GM12878 (cell line): ENCODE measurements at regions of chr3 and their contacts with region 1.

Region 1: GRCh38 chr3:17023006-17023664 is 138.4 kb downstream of the PLCL2 start:
- DNase-seq: peak; percentile 56
- ATAC-seq: peak; percentile 99
- H3K4me3 ChIP-seq: no peak overlapping the region
- H3K27ac ChIP-seq: peak overlapping the region; percentile 45; the same call in 1 of the 2 replicates
- H3K4me1 ChIP-seq: no peaks in the 10 kb centered on the region
- H3K27me3 ChIP-seq: no peaks in the 10 kb centered on the region
- CTCF ChIP-seq: no peak
- EP300 ChIP-seq: peak in 1 of 2 experiments; percentile 41; a peak in 2 of 4 replicates
- POLR2A ChIP-seq: no peak
- RAD21 ChIP-seq: no peak

Region 2: GRCh38 chr3:16546186-16547010 is 476.7 kb before region 1 on chr3:
- CTCF ChIA-PET with region 1: no interaction called
- POLR2A ChIA-PET with region 1: no interaction called
- RAD21 ChIA-PET with region 1: no interaction called
- SMC1A ChIA-PET with region 1: no interaction called
- in situ Hi-C with region 1: no loop called
- intact Hi-C with region 1: no loop called
- DNase-seq: no peak
- ATAC-seq: no peak
- H3K4me3 ChIP-seq: no peak overlapping the region
- H3K27ac ChIP-seq: no peak overlapping the region
- H3K4me1 ChIP-seq: peaks cover 13% of the 10 kb centered on the region
- H3K27me3 ChIP-seq: no peaks in the 10 kb centered on the region
- CTCF ChIP-seq: no peak
- EP300 ChIP-seq: no peak
- POLR2A ChIP-seq: no peak
- RAD21 ChIP-seq: no peak

Region 3: GRCh38 chr3:16828815-16829214 is 194.3 kb before region 1 on chr3:
- CTCF ChIA-PET with region 1: interaction called, 39 read pairs
- POLR2A ChIA-PET with region 1: interaction called, 3 read pairs
- RAD21 ChIA-PET with region 1: interaction called, 11 read pairs
- SMC1A ChIA-PET with region 1: interaction called, 5 read pairs
- in situ Hi-C with region 1: no loop called
- intact Hi-C with region 1: no loop called
- DNase-seq: no peak
- ATAC-seq: peak; percentile 90
- H3K4me3 ChIP-seq: no peak overlapping the region
- H3K27ac ChIP-seq: no peak overlapping the region
- H3K4me1 ChIP-seq: peaks cover 8% of the 10 kb centered on the region
- H3K27me3 ChIP-seq: no peaks in the 10 kb centered on the region
- CTCF ChIP-seq: peak; percentile 58 to 65 (median 60)
- EP300 ChIP-seq: no peak
- POLR2A ChIP-seq: no peak
- RAD21 ChIP-seq: peak; percentile 93

Region 4: GRCh38 chr3:16884084-16884747 is 138.9 kb before region 1 on chr3:
- CTCF ChIA-PET with region 1: interaction called, 21 read pairs
- POLR2A ChIA-PET with region 1: interaction called, 7 read pairs
- RAD21 ChIA-PET with region 1: interaction called, 50 read pairs
- SMC1A ChIA-PET with region 1: interaction called, 41 read pairs
- in situ Hi-C with region 1: no loop called
- intact Hi-C with region 1: no loop called
- DNase-seq: no peak
- ATAC-seq: peak; percentile 71
- H3K4me3 ChIP-seq: peak overlapping the region; percentile 75
- H3K27ac ChIP-seq: peak overlapping the region; percentile 93
- H3K4me1 ChIP-seq: peaks cover 2% of the 10 kb centered on the region; the same call in 1 of the 2 replicates
- H3K27me3 ChIP-seq: no peaks in the 10 kb centered on the region
- CTCF ChIP-seq: peak; percentile 37 to 79 (median 74)
- EP300 ChIP-seq: no peak
- POLR2A ChIP-seq: peak; percentile 66
- RAD21 ChIP-seq: peak; percentile 64

Region 5: DNA sequence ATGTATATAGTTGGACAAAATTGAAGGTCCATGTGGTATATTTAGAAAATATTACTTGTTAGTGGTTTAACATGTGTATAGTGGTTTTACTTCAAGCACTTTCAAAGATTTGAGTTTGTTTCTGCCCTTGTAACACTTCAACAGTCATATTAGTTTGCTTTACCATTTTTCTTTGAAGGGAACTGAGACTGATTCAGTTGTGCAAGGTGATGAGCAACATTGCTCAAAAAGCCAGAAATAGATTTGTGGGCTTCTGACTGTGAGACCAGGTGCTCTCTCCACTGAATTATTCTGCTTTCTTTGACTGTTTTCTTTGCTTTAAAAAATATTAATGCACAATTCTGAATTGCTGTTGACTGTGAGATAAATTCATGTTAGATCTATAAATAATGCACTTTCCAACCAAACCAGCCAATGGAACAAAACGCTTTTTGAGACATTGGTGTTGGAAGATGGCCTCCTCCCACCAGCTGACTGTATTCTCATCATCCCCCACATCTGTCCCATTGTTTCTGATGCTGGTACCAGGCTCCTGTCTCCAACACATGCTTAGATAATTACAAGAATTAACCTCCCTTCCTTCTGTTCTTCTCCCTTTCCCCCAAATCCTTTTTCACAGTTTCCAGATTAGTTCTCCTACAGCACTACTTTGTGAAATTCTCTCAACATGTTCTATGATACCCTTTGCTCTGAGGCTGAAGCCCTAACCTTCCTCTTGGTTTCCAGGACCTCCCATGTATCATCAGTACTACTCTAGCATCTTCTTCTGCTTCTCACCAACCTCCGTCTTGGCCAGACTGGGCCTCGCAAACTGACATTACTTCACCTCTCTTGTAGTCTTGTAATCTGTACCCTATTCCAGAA is 110.5 kb before region 1 on chr3:
- CTCF ChIA-PET with region 1: interaction called, 13 read pairs
- POLR2A ChIA-PET with region 1: interaction called, 5 read pairs
- RAD21 ChIA-PET with region 1: interaction called, 15 read pairs
- SMC1A ChIA-PET with region 1: interaction called, 44 read pairs
- in situ Hi-C with region 1: no loop called
- intact Hi-C with region 1: no loop called
- DNase-seq: peak; percentile 90
- ATAC-seq: peak; percentile 92
- H3K4me3 ChIP-seq: peak overlapping the region; percentile 27
- H3K27ac ChIP-seq: peak overlapping the region; percentile 99
- H3K4me1 ChIP-seq: peaks cover 49% of the 10 kb centered on the region
- H3K27me3 ChIP-seq: no peaks in the 10 kb centered on the region
- CTCF ChIP-seq: no peak
- EP300 ChIP-seq: peak; percentile 91 to 96
- POLR2A ChIP-seq: no peak
- RAD21 ChIP-seq: no peak

Region 6: DNA sequence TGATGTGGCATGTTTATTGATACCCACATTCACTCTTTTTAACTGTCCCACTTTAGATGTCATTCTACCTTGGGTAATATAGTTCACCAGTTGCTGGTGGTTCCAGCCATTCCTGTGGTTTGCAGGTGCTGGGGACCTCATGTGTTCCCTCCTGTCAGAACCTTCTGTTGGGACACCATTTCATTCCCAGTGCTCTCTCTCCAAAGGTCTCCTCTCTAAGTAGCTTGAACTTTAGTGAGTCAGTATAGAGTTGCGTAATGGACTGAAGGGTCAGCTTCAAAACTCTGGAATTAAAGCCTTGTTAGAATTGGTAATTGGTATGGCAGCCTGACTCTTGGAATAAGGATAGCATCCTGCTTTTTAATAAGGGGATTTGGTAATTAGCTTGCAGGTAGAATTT is 29.9 kb before region 1 on chr3:
- CTCF ChIA-PET with region 1: no interaction called
- POLR2A ChIA-PET with region 1: interaction called, 4 read pairs
- RAD21 ChIA-PET with region 1: interaction called, 10 read pairs
- SMC1A ChIA-PET with region 1: interaction called, 17 read pairs
- in situ Hi-C with region 1: no loop called
- intact Hi-C with region 1: no loop called
- DNase-seq: no peak
- ATAC-seq: no peak
- H3K4me3 ChIP-seq: no peak overlapping the region
- H3K27ac ChIP-seq: no peak overlapping the region
- H3K4me1 ChIP-seq: peaks cover 4% of the 10 kb centered on the region
- H3K27me3 ChIP-seq: no peaks in the 10 kb centered on the region
- CTCF ChIP-seq: no peak
- EP300 ChIP-seq: no peak
- POLR2A ChIP-seq: no peak
- RAD21 ChIP-seq: no peak

Region 7: DNA sequence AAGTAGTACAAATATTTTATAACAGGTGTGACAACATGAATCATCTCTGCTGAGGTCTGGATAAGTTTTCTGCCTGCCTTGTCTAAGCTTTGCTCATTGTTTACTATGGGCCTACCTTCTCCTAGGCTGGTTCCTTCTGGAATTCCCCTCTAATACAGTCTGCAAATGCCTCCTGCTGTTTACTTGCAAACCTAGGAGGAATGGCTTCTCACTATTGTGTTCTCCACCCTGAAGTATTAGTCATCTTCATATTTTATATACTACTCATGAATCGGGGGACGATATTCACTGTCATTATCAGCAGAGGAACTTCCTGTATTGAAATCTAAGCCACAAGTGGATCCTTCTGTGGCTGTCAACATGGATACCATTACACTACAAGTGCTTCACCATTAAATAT is 16.4 kb after region 1 on chr3:
- CTCF ChIA-PET with region 1: interaction called, 7 read pairs
- POLR2A ChIA-PET with region 1: interaction called, 5 read pairs
- RAD21 ChIA-PET with region 1: interaction called, 17 read pairs
- SMC1A ChIA-PET with region 1: interaction called, 24 read pairs
- in situ Hi-C with region 1: no loop called
- intact Hi-C with region 1: no loop called
- DNase-seq: no peak
- ATAC-seq: peak; percentile 52
- H3K4me3 ChIP-seq: no peak overlapping the region
- H3K27ac ChIP-seq: peak overlapping the region; percentile 42; the same call in 1 of the 2 replicates
- H3K4me1 ChIP-seq: peaks cover 21% of the 10 kb centered on the region
- H3K27me3 ChIP-seq: no peaks in the 10 kb centered on the region
- CTCF ChIP-seq: no peak
- EP300 ChIP-seq: no peak
- POLR2A ChIP-seq: no peak
- RAD21 ChIP-seq: no peak

Region 8: DNA sequence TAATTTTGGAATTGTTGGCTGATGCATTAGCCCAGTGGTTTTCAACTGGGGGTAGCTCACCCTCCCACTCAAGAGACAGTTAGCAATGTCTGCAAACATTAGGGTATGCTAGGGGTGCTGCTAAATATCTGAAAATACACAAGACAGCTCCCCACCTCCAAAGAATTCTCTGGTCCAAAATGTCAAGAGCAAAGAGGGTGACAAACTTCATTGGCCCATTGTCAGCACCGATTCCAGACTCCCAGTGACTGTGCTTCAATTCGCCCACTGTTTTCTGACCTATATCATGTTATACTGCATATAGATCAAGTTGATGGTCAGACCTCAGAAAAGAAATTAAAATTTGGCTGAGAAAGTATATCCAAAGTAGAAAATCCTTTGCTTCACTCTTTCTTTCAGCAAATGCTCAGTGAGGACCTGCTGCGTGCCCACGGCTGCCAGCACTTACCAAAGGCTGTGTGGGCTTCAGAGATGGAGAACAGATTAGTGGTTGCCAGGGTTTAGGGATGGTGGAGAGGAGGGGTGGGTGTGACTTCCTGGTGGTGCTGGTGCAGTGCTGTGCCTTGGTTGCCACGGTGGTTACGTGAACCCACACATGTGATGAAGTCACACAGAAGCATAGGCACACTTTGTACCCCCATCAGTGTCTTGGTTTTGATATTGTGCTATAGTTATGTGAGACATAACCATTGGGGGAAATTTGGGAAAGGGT is 65.6 kb after region 1 on chr3:
- CTCF ChIA-PET with region 1: no interaction called
- POLR2A ChIA-PET with region 1: no interaction called
- RAD21 ChIA-PET with region 1: no interaction called
- SMC1A ChIA-PET with region 1: no interaction called
- in situ Hi-C with region 1: no loop called
- intact Hi-C with region 1: no loop called
- DNase-seq: no peak
- ATAC-seq: no peak
- H3K4me3 ChIP-seq: no peak overlapping the region
- H3K27ac ChIP-seq: no peak overlapping the region
- H3K4me1 ChIP-seq: no peaks in the 10 kb centered on the region
- H3K27me3 ChIP-seq: no peaks in the 10 kb centered on the region
- CTCF ChIP-seq: no peak
- EP300 ChIP-seq: no peak
- POLR2A ChIP-seq: no peak
- RAD21 ChIP-seq: no peak

Region 9: DNA sequence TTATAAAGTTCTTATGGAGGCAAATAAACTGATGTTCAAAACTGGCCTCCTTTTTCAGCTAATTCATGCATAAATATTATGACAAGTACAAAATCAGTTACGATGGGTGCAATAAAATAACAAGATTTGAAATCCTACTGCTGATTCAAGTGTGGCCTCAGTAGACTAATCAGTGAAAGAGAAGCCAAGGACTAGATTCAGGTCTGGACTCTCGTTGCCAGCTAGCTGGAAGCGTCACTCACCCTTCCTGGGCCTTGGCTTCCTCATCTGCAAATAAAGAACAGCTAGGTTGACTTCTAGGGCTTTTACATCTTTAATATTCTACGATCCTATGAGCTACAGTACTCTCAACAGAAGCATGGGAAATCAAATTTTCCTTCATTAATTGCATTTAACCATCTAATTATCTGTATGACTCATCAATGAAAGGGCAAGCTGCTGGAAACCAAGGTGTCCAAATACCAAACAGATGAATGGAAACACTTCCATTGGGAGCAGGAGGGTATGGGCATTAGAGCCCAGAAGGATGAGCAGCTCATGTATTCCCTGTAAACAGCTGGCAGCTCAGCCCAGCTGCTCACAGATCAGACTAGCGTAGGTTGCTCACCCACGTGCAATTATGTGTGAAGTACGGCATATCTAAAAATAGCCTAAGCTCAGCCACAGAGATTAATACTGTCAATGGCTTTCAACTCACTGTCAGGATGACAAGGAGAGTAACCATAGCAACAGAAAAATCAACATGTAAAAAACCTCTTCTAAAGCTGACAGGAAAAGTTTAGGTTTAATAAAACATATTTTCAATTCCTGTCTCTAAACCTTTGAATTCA is 156.5 kb after region 1 on chr3:
- CTCF ChIA-PET with region 1: interaction called, 5 read pairs
- POLR2A ChIA-PET with region 1: interaction called, 6 read pairs
- RAD21 ChIA-PET with region 1: interaction called, 10 read pairs
- SMC1A ChIA-PET with region 1: interaction called, 4 read pairs
- in situ Hi-C with region 1: no loop called
- intact Hi-C with region 1: no loop called
- DNase-seq: peak; percentile 56
- ATAC-seq: peak; percentile 84
- H3K4me3 ChIP-seq: no peak overlapping the region
- H3K27ac ChIP-seq: no peak overlapping the region
- H3K4me1 ChIP-seq: peaks cover 38% of the 10 kb centered on the region
- H3K27me3 ChIP-seq: no peaks in the 10 kb centered on the region
- CTCF ChIP-seq: no peak
- EP300 ChIP-seq: peak; percentile 82 to 97
- POLR2A ChIP-seq: no peak
- RAD21 ChIP-seq: no peak